AG04450 (cell line): ENCODE measurements at regions of chr20 and their contacts with region 1.

Region 1: GRCh38 chr20:63574156-63574828 is at the start of gene HELZ2:
- DNase-seq: no peak
- H3K4me3 ChIP-seq: peak within 1 kb of the TSS; percentile 85
- H3K27ac ChIP-seq: peak within 1 kb of the TSS; percentile 21
- H3K27me3 ChIP-seq: no peaks in the 10 kb centered on the region
- CTCF ChIP-seq: no peak
- polyA plus RNA-seq, gene HELZ2: 4.6 and 7.0 TPM in 2 replicates

Region 2: DNA sequence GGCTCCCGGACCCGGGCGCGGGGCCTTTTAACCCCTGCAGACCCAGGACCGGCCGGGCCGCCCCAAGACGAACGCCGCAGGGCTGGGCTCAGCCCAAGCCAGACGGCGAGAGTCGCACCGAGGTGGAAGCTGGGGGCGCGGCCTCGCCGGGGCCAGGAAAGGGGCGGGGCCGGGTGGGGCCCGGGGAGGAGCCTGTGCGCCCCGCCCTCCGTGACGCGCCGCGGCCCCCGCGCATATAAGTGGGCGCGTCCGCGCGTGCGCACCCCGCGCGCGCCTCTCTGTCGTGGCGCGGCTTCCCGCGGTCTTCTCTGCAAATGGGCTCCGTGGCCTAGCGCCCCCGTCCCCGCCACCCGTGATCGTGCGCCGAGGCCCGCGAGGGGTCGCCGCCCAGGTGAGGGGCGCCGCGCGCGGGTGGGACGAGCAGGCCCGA is 53.8 kb before region 1 on chr20 and contains the start of gene PPDPF:
- CTCF ChIA-PET with region 1: no interaction called
- POLR2A ChIA-PET with region 1: interaction called, 13 read pairs
- DNase-seq: peak; percentile 34
- H3K4me3 ChIP-seq: peak within 1 kb of the TSS; percentile 88
- H3K27ac ChIP-seq: peak within 1 kb of the TSS; percentile 47
- H3K27me3 ChIP-seq: no peaks in the 10 kb centered on the region
- CTCF ChIP-seq: no peak
- polyA plus RNA-seq, gene PPDPF: 13.5 and 21.7 TPM in 2 replicates